Gastrocnemius medialis (tissue), 4 donors: ENCODE measurements at regions of chr11 and their contacts with region 1.

Region 1: GRCh38 chr11:74102321-74102720 is 68.5 kb downstream of the C2CD3 start:
- DNase-seq: no peak
- ATAC-seq: no peak
- H3K4me3 ChIP-seq: no peak overlapping the region
- H3K27ac ChIP-seq: no peak overlapping the region
- H3K4me1 ChIP-seq: no peaks in the 10 kb centered on the region
- H3K27me3 ChIP-seq: no peaks in the 10 kb centered on the region
- CTCF ChIP-seq: no peak
- POLR2A ChIP-seq: no peak

Region 2: DNA sequence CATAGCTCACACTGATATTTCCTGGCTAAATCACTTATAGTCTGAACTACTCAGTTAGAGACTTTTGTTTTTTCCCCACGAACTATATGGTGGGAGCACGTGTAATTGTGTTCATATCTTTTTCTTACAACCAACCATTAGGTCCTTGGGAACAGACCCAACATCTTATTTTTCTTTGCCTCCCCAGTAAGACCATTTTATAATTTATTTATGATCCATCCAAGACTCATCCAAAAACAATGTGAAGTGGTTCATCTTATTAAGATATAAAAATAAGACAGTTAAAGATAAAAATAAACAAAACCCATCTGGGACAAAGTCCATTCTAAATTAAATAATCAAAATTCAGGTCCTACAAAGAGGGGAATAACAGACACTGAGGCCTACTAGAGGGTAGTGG is 595.2 kb before region 1 on chr11:
- in situ Hi-C with region 1: no loop called
- intact Hi-C with region 1: no loop called
- DNase-seq: no peak
- ATAC-seq: no peak
- H3K4me3 ChIP-seq: no peak overlapping the region
- H3K27ac ChIP-seq: no peak overlapping the region
- H3K4me1 ChIP-seq: peaks cover 0 to 7% of the 10 kb centered on the region in 2 donors
- H3K27me3 ChIP-seq: no peaks in the 10 kb centered on the region
- CTCF ChIP-seq: no peak
- POLR2A ChIP-seq: no peak

Region 3: DNA sequence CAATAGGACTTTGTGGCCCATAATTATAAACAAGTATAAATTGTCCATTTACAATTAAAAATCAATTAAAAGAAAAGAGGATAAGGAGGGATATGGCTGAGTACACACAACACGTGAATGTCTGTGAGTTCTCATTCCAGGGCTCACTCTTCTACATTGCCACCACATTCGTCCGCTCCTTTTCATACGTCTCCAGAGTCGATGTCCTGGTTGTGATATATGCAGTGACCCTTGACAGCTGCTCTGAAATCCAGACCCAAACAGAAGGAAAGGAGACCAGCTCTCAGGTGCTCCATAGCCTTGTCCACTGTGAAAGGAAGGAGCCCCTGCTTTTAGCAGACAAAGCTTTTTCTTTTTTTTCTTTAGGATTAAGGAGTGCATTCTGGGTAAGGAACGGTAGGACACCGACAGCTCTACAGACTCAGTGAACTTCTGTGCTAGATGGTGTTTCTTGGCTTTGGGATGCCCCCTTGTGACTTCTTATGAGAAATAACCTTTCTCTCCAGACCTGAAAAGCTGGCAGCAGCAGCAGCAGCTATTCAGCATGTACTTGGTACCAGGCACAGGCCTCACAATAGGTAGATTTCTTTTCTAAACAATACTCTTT is 171.2 kb before region 1 on chr11:
- in situ Hi-C with region 1: no loop called
- intact Hi-C with region 1: no loop called
- DNase-seq: no peak
- ATAC-seq: peak in 1 of 2 donors; percentile 42
- H3K4me3 ChIP-seq: no peak overlapping the region
- H3K27ac ChIP-seq: no peak overlapping the region
- H3K4me1 ChIP-seq: no peaks in the 10 kb centered on the region
- H3K27me3 ChIP-seq: no peaks in the 10 kb centered on the region
- CTCF ChIP-seq: no peak
- POLR2A ChIP-seq: no peak

Region 4: GRCh38 chr11:74773481-74773880 is 671.2 kb after region 1 on chr11:
- in situ Hi-C with region 1: no loop called
- intact Hi-C with region 1: loop called (anchors 10 kb)
- DNase-seq: no peak
- ATAC-seq: no peak
- H3K4me3 ChIP-seq: no peak overlapping the region
- H3K27ac ChIP-seq: no peak overlapping the region
- H3K4me1 ChIP-seq: peaks cover 20 to 25% of the 10 kb centered on the region in 2 donors
- H3K27me3 ChIP-seq: no peaks in the 10 kb centered on the region
- CTCF ChIP-seq: no peak
- POLR2A ChIP-seq: no peak